Calu3 (cell line): ENCODE measurements at regions of chr18 and their contacts with region 1.

Region 1: DNA sequence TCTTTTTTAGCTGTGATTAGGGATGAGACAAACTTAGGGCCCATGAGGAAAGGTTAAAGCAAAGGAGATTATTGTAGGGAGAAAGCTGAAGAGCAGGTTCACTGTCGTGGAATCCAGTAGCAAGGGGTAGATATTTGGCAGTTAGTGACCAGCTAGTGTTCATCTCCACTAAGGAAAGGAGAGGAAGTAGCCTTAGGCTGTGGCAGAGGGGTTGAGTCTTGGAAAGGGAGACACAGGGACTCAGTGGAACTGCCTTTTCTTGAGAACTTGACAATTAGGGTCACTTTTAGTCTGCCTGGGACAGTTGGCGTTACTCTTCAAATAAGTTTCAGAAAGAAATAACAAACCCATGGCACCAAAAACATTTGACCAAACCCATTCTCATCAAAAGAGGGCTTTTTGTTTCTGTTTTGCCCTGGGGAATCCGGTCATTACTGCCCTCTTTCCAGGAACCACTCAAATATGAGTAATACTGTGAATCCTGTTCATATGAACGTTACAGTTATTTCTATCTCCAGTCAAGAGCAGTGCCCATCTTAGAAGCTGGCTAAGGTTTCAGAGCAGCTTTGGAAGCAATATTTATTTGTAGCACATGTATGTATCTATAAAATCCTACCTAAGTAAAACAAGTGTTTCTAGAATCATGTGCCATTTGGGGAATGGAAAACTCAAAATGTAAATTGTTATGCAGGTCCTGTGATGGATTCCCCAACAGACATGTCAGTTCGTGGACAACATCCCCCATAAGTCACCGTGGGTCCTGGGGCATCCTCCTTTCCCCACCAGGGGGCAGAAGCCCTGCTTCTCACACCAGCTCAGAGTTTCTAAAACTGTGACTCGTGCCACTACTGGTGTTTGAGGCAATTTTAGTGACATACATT is 77.3 kb upstream of the PHLPP1 start:
- DNase-seq: peak; percentile 70
- H3K4me3 Mint-ChIP-seq: no peak overlapping the region
- H3K27ac Mint-ChIP-seq: no peak overlapping the region
- H3K4me1 Mint-ChIP-seq: peaks cover 20% of the 10 kb centered on the region
- H3K27me3 Mint-ChIP-seq: no peaks in the 10 kb centered on the region
- CTCF ChIP-seq: peak; percentile 75

Region 2: DNA sequence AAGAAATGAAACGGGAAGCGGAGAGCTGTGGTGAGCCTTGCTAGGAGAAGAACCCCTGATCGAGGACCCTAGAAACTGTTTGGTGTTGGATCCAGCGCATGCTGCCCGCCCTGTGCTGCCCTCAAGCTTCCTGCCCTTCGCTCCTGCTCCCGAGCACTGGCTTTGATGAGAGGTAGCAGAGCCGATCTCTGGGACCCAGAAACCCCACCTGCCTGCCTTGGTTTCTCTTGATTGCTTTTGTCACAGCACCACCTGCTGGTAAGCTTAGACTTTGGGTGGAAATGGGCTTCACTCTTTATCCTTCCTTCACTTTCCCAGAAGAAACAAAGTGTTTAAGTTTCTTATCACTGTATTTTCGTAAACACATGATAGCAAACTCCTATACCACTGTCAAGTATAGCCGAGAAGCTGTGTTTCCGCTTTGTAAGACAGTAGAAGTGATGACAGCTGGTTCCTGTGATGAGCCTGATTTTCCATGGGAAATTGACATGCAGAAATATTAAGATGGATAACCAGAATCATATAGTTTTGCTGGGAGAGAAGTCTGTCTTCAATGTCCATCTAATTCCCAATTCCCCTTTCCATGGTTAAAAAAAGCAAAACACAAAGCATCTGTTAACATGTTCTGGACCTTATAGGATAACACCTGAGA is 344.7 kb after region 1 on chr18:
- CTCF ChIA-PET with region 1: interaction called, 8 read pairs
- intact Hi-C with region 1: loop called (anchors 5 kb)
- DNase-seq: peak; percentile 74
- H3K4me3 Mint-ChIP-seq: no peak overlapping the region
- H3K27ac Mint-ChIP-seq: peak overlapping the region; percentile 27
- H3K4me1 Mint-ChIP-seq: peaks cover 32% of the 10 kb centered on the region
- H3K27me3 Mint-ChIP-seq: no peaks in the 10 kb centered on the region
- CTCF ChIP-seq: peak; percentile 86

Region 3: DNA sequence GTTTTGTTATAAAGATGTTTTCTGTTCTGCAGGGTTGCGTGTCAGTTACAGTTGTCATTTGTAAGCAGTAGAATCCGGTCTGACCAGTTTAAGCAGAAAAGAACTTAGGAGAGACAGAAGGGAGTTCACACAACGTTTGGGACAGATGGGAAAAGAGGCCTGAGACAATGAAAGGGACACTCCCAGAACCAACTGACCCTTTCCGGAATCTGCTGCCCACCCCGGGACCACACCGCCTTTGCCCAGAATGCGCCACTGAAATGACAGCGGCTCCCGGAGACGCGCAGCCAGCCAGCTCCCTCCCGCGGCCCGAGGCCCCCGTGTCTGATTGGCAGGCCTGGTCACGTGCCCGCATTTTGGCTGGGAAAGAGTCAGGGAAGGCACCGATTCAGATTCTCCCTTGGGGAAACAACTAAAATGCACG is 436.9 kb after region 1 on chr18:
- CTCF ChIA-PET with region 1: no interaction called
- intact Hi-C with region 1: loop called (anchors 10 kb)
- DNase-seq: peak; percentile 82
- H3K4me3 Mint-ChIP-seq: peak overlapping the region; percentile 78
- H3K27ac Mint-ChIP-seq: peak overlapping the region; percentile 92
- H3K4me1 Mint-ChIP-seq: peaks cover 9% of the 10 kb centered on the region
- H3K27me3 Mint-ChIP-seq: no peaks in the 10 kb centered on the region
- CTCF ChIP-seq: no peak